RWPE1 (cell line): ENCODE measurements at regions of chr9 and their contacts with region 1.

Region 1: DNA sequence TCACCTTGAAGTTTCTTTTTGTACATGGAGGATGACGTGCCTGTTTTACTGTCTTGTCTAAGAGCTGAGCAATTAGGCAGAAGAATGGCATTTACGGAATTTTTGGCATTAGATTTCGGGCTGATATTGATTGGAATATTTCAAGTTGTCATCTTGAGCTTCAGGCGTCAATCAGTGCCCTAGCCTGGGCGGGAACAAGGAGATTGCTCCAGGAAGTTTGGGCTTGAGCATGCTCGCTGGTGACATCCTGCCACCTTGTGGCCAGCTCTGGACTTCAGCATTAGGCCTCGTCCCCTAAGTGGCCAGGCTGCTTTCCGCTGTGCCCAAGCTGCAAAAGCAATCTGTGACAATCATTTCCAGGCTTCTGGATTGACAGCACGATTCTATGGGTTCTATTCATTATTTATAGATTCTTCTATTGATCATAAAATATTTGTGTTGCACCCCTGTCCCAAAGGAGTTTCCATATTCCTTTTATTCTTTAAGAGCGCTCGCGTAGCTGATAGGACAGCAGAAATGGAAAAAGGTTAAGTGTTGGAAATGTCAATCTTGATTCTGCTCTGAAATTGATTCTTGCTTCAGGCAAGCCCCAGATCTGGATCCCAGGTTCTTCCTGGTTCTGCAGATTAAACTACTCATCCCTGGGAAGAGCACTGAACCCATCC is 79.3 kb downstream of the SLC28A3 start:
- DNase-seq: peak; percentile 87
- H3K27ac ChIP-seq: peak overlapping the region; percentile 32; the same call in 1 of the 2 replicates
- CTCF ChIP-seq: peak; percentile 92

Region 2: GRCh38 chr9:83920927-83921707 is 340.1 kb before region 1 on chr9 and contains the start of gene KIF27:
- CTCF ChIA-PET with region 1: interaction called, 10 read pairs
- POLR2A ChIA-PET with region 1: no interaction called
- DNase-seq: peak; percentile 95
- H3K27ac ChIP-seq: peak within 1 kb of the TSS; percentile 98
- CTCF ChIP-seq: peak; percentile 64

Region 3: DNA sequence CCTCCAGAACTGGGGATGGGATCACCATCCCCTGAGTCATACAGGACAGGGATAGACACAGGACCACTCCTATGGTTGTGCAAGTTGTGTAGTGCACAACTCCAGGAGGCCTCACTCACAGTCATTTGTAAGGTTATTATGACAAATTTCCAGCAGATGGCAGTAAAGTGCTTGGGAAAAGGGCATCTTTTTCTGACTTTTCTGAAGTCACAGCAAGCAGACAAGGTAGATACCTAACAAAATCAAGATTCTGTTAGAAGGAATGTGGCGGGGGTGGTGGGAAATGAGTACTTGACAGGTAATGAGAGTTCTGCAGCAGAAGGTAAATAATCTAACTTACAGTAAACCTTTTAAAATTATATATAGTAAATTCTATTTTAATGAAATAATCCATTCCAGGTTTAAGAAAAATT is 323.3 kb before region 1 on chr9:
- CTCF ChIA-PET with region 1: interaction called, 21 read pairs
- POLR2A ChIA-PET with region 1: no interaction called
- DNase-seq: peak; percentile 57
- H3K27ac ChIP-seq: no peak overlapping the region
- CTCF ChIP-seq: peak; percentile 63

Region 4: DNA sequence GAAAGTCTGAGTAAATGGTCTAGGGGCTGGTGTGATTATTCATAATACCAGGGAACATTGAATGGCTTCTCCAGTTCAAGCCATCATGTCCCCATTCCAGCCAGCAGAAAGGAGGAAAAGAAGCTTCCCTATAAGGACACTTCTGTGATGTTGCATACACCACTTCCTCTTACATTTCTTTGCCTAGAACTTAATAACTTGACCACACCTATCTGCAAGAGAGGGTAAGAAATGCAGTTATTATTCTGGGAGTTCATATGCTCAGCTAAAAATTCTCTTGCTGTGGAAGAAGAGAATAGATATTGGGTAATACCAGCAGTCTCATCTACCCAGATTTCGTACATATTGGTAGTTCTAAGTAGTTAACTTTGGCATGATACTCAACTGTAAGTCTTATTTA is 86.7 kb before region 1 on chr9:
- CTCF ChIA-PET with region 1: interaction called, 12 read pairs
- POLR2A ChIA-PET with region 1: no interaction called
- DNase-seq: no peak
- H3K27ac ChIP-seq: no peak overlapping the region
- CTCF ChIP-seq: no peak

Region 5: DNA sequence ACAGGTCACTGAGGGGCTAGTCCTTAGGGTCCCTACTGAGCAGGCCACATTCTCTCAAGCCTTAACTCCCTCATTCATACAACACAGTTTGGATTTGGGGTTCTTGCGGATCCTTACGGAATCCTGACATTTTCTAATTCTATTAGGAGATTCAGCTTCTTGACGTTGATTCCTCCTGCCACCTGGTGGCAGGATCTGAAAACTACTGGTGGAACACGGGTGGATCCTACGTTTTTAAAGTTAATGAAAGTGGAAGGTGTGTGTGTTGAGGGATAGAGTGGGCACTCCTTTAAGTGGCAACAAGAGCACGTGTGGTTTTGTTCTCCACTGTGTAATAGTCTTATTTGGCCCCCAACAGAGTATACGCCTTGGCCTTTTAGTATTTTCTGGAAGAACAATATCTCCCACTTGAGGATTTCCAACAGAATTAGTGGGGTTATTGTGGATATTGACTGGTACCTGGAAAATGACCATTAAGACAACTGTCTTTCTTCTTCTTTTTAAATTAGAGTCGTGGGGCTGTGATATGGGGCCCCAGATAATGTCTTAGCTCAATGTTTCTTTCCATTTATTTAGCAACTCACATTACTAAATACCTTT is 54.2 kb after region 1 on chr9:
- CTCF ChIA-PET with region 1: interaction called, 16 read pairs
- POLR2A ChIA-PET with region 1: no interaction called
- DNase-seq: peak; percentile 74
- H3K27ac ChIP-seq: no peak overlapping the region
- CTCF ChIP-seq: peak; percentile 82

Region 6: GRCh38 chr9:84343111-84343521 is 81.9 kb after region 1 on chr9:
- CTCF ChIA-PET with region 1: interaction called, 13 read pairs
- POLR2A ChIA-PET with region 1: no interaction called
- DNase-seq: no peak
- H3K27ac ChIP-seq: no peak overlapping the region
- CTCF ChIP-seq: no peak